Colonic mucosa (tissue), 4 donors: ENCODE measurements at regions of chr12 and their contacts with region 1.

Region 1: GRCh38 chr12:107760809-107761501 is at the start of gene PRDM4:
- DNase-seq: peak; percentile 91
- H3K4me3 ChIP-seq: peak within 1 kb of the TSS; percentile 82
- H3K27ac ChIP-seq: peak within 1 kb of the TSS; percentile 72
- H3K4me1 ChIP-seq: no peaks in the 10 kb centered on the region
- H3K27me3 ChIP-seq: no peaks in the 10 kb centered on the region
- CTCF ChIP-seq: no peak
- total RNA-seq, gene PRDM4: 32.7 to 36.1 TPM

Region 2: GRCh38 chr12:107544937-107545336 is 216.0 kb before region 1 on chr12:
- intact Hi-C with region 1: no loop called
- DNase-seq: no peak
- H3K4me3 ChIP-seq: no peak overlapping the region
- H3K27ac ChIP-seq: no peak overlapping the region
- H3K4me1 ChIP-seq: no peaks in the 10 kb centered on the region
- H3K27me3 ChIP-seq: no peaks in the 10 kb centered on the region
- CTCF ChIP-seq: no peak

Region 3: GRCh38 chr12:107685360-107686248 is 75.4 kb before region 1 on chr12 and contains the start of gene PWP1:
- intact Hi-C with region 1: loop called (anchors 5 kb)
- DNase-seq: peak; percentile 95
- H3K4me3 ChIP-seq: peak within 1 kb of the TSS; percentile 74
- H3K27ac ChIP-seq: peak within 1 kb of the TSS; percentile 34
- H3K4me1 ChIP-seq: no peaks in the 10 kb centered on the region
- H3K27me3 ChIP-seq: no peaks in the 10 kb centered on the region
- CTCF ChIP-seq: no peak
- total RNA-seq, gene PWP1: 19.7 to 23.8 TPM

Region 4: DNA sequence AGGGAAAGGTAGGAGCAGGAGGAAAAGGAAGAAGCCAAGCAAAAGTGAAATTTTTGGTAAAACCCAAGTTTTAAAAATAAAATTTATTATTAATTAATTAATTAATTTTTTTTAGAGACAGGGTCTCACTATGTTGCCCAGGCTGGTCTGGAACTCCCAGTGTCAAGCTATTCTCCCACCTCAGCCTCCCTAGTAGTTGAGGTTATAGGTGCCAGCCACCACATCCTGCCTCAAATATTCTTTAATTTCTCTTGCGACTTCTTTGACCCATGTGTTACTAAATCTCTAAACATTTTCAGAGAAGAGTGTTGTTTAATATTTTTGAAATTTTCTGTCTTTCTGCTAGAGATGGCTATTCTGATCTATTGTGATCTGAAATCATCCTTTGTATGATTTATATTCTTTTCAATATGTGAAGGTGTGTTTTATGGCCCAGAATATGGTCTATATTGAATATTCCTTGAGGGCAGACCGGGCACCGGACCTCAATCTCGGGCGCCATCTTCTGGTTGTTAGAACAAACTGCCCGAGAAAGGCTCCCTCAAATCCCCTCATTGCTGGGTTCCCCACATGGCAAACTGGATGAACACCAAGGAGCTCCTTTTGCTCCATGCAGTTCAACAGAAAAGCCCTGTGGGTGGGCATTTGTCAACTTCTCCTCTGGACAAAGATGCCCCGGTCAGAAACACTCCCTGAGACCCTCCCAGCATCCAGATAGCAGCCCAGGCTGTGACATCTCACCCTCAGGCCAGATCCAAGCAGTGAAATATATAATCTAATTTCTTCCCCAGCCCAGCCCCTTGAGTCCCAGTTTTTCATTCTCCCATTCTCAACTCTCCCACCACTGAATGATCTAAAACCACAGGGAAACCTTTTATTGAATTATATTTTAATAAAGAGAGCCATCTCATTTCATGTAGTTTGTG is 124.1 kb after region 1 on chr12:
- intact Hi-C with region 1: loop called (anchors 5 kb)
- DNase-seq: peak; percentile 53
- H3K4me3 ChIP-seq: no peak overlapping the region
- H3K27ac ChIP-seq: no peak overlapping the region
- H3K4me1 ChIP-seq: no peaks in the 10 kb centered on the region
- H3K27me3 ChIP-seq: no peaks in the 10 kb centered on the region
- CTCF ChIP-seq: peak; percentile 50